ENCODE measurements at regions of chr14 and their contacts with region 1.

Region 1: GRCh38 chr14:101796479-101796878 is 35.0 kb downstream of the PPP2R5C start:
- DNase-seq: no peak
- H3K4me3 ChIP-seq: no peak overlapping the region
- H3K27ac ChIP-seq: peak overlapping the region; percentile 46
- H3K4me1 ChIP-seq: peaks cover 6% of the 10 kb centered on the region
- H3K27me3 ChIP-seq: no peaks in the 10 kb centered on the region
- CTCF ChIP-seq: no peak

Region 2: DNA sequence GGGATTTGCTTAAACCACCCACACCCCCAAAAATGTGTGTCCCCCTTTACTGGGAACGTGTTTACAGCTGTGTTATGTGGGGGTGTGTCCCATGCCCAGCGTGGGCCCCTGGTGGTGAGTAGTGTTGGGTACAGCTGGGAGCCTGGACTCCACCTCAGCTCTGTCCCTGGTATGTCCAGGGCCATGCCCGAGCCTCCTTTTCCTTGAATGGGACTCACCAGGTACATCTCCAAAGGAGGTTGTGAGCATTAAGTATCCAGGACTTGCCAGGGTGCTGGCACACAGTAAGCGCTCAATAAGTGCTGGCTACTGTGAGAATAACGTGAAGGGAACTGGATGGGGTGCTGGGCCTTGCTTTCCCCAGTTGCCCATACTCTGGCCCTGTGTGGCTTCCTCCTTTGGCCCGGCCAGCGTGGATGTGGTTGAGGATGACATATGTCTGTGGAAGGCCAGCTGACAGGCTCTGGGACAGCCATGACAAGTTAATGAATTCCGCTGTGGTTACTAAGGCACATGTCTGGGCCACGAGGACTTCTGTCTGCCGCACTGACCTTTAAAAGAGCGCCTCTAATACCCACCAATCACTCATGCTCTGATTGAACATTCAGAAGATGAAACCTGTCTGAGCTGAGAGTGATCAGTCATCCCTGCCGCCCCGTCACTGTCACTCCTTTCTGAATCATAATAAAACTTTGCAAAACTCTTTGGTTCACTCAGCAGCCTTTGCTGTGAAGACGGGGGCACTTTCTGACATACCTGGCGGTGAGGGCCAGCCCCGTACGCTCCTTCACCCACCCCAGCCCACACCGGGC is 160.5 kb before region 1 on chr14:
- CTCF ChIA-PET with region 1: no interaction called
- POLR2A ChIA-PET with region 1: no interaction called
- intact Hi-C with region 1: no loop called
- DNase-seq: no peak
- H3K4me3 ChIP-seq: no peak overlapping the region
- H3K27ac ChIP-seq: no peak overlapping the region
- H3K4me1 ChIP-seq: no peaks in the 10 kb centered on the region
- H3K27me3 ChIP-seq: peaks cover 51% of the 10 kb centered on the region
- CTCF ChIP-seq: no peak

Region 3: GRCh38 chr14:101809671-101810514 is 13.4 kb after region 1 on chr14:
- CTCF ChIA-PET with region 1: interaction called, 14 read pairs
- POLR2A ChIA-PET with region 1: no interaction called
- intact Hi-C with region 1: no loop called
- DNase-seq: peak; percentile 97
- H3K4me3 ChIP-seq: peak overlapping the region; percentile 63
- H3K27ac ChIP-seq: peak overlapping the region; percentile 98
- H3K4me1 ChIP-seq: peaks cover 19% of the 10 kb centered on the region
- H3K27me3 ChIP-seq: no peaks in the 10 kb centered on the region
- CTCF ChIP-seq: no peak

Measured in A673 (cell line).